Right ventricle myocardium inferior (tissue), 1 donor: ENCODE measurements at regions of chr10 and their contacts with region 1.

Region 1: DNA sequence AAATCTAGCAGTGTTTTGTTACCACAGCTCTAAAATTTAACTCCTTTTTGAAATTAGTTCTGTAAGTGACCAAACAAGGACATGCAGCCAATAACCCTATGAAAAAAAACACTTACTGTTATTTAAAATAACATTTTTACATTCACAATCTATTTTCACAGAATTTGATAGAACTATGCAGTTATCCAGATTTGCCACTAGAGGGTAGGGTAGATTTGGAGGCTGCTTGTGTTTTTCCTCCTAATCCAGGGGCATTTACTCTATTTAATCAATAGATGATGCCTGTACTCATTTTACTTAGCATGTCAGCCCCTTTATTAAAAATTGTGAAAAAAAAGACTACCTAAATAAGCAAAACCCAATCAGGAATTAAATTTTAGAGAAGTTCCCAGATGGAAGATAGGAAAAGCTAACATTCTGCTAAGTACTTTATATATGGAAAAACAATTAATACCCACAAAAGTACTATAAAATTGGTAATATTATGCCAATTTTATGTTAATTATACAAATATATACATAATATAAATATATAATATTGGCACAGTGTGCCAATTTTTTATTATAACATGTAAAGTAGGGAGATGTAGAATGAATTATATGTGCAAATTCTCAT is 18.1 kb upstream of the LIPK start:
- DNase-seq: no peak
- ATAC-seq: no peak

Region 2: DNA sequence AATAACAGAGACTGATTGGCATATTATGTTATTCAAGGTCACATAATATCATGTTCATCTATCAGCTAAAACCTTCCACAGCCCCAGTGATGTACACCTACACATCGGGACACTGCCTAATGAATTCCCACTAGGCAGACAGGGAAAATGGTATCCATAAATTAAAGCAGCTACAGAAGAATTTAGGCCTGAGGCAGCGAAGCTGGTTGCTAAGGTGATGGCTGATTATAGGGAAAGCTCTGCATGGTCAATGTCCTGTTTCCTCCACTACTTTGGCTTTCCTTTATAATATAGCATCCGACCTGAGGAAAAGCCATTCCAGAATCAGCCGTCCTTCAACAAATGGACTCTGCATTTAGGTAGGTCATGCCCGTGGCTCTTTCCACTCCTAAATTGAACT is 101.6 kb after region 1 on chr10:
- intact Hi-C with region 1: loop called (anchors 5 kb)
- DNase-seq: no peak
- ATAC-seq: no peak

Region 3: DNA sequence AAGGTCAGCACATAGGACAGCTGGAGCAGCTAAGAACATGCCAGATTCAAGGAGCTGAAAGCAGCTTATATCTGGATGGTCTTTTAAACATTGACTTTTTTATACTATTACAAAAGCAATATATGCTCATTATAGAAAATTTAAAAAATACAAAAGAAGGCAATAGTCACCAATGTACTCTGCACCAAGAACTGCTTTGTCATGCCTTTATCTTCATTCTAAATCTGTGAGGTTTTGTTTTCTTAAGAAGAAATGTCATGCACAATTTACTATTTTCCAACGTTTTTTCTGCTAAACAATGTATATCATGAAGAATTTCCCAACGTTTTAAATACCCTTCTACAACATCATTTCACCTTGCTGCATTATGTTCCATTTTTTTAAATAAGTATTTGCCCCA is 117.4 kb after region 1 on chr10:
- intact Hi-C with region 1: loop called (anchors 5 kb)
- DNase-seq: no peak
- ATAC-seq: no peak